PC-3 (cell line): ENCODE measurements at regions of chr2 and their contacts with region 1.

Region 1: GRCh38 chr2:1750933-1751766 is 6.8 kb upstream of the PXDN start:
- DNase-seq: peak; percentile 86
- ATAC-seq: peak; percentile 91
- H3K4me3 ChIP-seq: no peak overlapping the region
- H3K27ac ChIP-seq: no peak overlapping the region
- H3K4me1 ChIP-seq: peaks cover 4% of the 10 kb centered on the region
- H3K27me3 ChIP-seq: no peaks in the 10 kb centered on the region
- CTCF ChIP-seq: peak; percentile 90

Region 2: DNA sequence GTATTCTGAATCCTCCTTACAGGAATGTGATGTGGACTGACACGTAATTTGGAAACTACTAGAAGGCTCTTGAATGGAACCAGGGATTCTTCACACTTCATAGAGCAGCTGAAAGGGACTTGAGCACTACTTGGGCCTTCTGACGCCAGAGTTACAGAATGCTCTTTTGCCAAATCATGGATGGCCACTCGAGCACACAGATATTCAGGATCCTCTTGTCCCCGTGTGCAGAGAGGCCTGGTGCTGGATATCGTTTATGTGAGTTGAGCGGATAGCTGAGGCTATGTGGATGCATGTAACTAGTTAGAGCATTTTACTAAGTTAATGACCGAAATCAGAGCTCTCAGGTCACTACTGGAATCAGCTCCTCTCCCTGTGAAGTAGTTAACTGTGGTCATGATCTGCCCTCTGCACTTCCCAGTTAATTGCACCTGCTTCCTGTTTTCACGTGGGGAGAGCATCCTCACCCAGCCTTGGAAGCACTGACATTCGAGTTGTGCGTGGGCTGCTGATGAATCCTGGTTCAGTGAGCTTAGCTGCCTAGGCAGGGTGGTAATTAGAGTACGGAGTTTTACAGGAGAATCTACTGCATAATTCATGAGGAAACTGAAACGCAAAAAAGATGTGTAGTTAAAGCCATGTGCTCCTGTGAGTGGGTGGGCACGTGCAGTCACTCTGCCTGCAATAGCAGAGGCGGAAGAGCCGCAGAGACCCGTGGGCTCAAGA is 343.0 kb before region 1 on chr2:
- CTCF ChIA-PET with region 1: no interaction called
- POLR2A ChIA-PET with region 1: no interaction called
- intact Hi-C with region 1: no loop called
- DNase-seq: no peak
- ATAC-seq: no peak
- H3K4me3 ChIP-seq: no peak overlapping the region
- H3K27ac ChIP-seq: no peak overlapping the region
- H3K4me1 ChIP-seq: no peaks in the 10 kb centered on the region
- H3K27me3 ChIP-seq: peaks cover 92% of the 10 kb centered on the region
- CTCF ChIP-seq: no peak

Region 3: DNA sequence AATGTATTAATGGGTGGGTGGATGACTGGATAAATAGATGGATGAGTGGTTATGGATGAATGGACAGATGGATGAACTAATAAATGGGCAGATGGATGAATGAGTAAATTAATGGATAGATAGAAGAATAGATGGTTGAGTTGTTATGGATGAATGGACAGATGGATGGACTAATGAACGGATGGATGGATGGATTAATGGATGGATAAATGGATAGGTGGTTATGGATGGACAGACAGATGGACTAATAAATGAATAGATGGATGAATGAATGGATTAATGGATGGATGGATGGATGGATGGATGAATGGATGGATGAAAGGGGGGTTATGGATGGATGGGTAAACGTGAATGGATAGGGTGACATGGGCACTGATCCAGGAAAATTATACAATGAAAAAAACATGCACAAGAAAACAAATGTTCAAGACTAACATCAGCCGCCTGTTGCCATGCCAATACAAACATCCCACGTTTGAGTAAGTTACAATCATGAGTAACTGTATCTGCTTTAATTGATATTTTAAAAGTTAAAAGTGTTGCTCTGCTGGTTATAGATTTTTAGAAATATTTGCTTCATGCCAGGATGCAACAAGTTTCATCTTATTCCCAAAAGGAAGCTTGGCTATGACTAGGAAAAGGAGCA is 27.6 kb before region 1 on chr2:
- CTCF ChIA-PET with region 1: no interaction called
- POLR2A ChIA-PET with region 1: no interaction called
- intact Hi-C with region 1: no loop called
- DNase-seq: no peak
- ATAC-seq: no peak
- H3K4me3 ChIP-seq: no peak overlapping the region
- H3K27ac ChIP-seq: peak overlapping the region; percentile 79
- H3K4me1 ChIP-seq: peaks cover 61% of the 10 kb centered on the region
- H3K27me3 ChIP-seq: no peaks in the 10 kb centered on the region
- CTCF ChIP-seq: no peak

Region 4: GRCh38 chr2:1769703-1770422 is 18.7 kb after region 1 on chr2:
- CTCF ChIA-PET with region 1: interaction called, 10 read pairs
- POLR2A ChIA-PET with region 1: no interaction called
- intact Hi-C with region 1: no loop called
- DNase-seq: peak; percentile 91
- ATAC-seq: peak; percentile 99
- H3K4me3 ChIP-seq: no peak overlapping the region
- H3K27ac ChIP-seq: no peak overlapping the region
- H3K4me1 ChIP-seq: no peaks in the 10 kb centered on the region; the same call in 1 of the 2 replicates
- H3K27me3 ChIP-seq: no peaks in the 10 kb centered on the region
- CTCF ChIP-seq: peak; percentile 97

Region 5: DNA sequence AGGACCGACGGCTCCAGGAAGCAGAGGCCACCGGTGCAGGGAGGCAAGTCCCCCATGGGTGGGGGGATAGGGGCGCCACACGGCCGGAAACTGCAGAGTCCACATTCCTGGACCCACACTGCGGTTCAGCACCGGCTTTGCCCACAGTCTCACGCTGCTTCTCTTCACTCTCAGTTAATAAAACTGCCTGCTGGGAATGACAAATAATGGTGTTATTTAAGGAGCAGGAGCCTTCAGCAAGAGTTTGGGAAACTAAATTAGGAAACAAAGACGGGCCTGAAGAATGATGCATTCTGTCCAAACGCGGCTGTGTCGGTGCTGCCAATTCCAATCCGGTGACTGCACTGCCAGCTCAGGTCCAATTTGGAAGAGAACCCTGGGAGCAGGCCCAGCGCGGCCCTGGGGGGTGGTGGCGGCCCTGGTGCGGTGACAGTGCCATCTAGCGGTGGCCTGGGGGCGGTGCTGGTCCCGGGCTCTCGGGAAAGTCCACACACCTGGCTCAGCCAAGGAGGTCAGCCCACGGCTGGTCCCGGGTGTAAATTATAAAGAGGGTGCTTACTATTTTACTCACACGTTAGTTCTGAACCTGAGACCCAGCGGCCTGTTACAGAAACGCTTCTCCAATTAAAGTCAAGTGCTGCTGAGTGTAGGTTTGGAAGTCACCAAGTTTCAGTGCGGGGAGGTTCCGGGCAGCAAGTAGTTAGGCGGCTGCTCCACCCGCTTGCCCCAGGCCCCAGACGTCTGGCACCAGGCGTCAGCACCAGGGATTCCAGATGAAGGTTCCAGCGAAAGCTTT is 66.3 kb after region 1 on chr2:
- CTCF ChIA-PET with region 1: interaction called, 5 read pairs
- POLR2A ChIA-PET with region 1: no interaction called
- intact Hi-C with region 1: loop called (anchors 2 kb)
- DNase-seq: peak; percentile 89
- ATAC-seq: peak; percentile 94
- H3K4me3 ChIP-seq: peak overlapping the region; percentile 33; the same call in 1 of the 2 replicates
- H3K27ac ChIP-seq: peak overlapping the region; percentile 74
- H3K4me1 ChIP-seq: peaks cover 23% of the 10 kb centered on the region
- H3K27me3 ChIP-seq: no peaks in the 10 kb centered on the region
- CTCF ChIP-seq: peak; percentile 96